H1 (cell line): ENCODE measurements at regions of chr5 and their contacts with region 1.

Region 1: DNA sequence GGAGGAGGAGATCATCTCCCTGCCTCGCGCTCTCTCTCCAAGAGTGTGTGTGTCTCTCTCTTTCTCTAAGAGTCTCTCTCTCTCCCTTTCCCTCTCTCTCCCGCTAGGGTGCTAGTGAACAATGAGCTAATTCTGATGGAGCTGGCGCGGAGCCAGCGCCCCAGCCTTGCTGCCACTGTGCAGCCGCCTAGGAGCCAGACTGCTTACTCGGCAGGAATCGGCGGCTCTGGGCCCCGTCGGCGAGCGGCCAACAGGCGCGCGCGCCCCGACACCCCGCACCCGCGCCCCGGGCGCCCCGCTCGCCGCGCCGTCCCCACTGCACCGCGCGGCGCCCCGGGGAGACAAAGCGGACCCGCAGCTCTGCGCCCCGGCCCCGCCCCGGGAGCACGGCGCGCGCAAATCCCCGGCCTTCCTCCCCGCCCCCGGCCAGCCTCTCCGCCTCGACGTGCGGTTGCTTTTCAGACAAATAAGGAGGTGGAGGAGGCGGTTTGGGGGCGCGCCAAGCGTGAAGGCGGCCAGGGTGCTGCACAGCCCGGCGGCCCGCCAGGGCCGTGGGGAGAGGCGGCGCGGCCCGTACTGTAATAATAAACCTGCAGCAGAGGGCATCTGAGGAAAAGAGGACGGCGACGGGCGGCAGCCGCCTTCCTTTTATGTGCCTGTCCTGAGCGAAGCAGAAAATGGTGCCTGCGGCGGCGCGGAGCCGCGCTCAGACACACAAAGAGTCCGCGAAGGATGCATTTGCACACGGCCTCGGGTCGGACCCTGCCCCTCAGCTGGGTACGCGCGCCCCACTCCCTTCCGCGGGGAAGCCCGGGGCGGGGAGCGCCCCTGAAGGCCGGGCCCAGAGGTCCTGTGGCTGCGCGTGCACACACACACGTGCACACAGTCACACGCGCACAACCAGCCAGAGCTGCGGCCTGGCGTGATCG is 625 bp upstream of the NREP start:
- DNase-seq: peak in 1 of 2 experiments; percentile 86
- H3K4me3 ChIP-seq: peak overlapping the region; percentile 62 to 99 (median 75)
- H3K27ac ChIP-seq: peak overlapping the region; percentile 94
- H3K4me1 ChIP-seq: peaks cover 0 to 8% (median 3%) of the 10 kb centered on the region in 4 experiments; a peak in 3 of 7 replicates
- H3K27me3 ChIP-seq: no peaks in the 10 kb centered on the region
- CTCF ChIP-seq: peak in 1 of 3 experiments; percentile 10; a peak in 1 of 4 replicates
- EP300 ChIP-seq: no peak
- POLR2A ChIP-seq: peak; percentile 91 to 95
- RAD21 ChIP-seq: peak; percentile 1 to 15; a peak in 1 of 4 replicates

Region 2: GRCh38 chr5:111719773-111720172 is 37.8 kb before region 1 on chr5:
- CTCF ChIA-PET with region 1: interaction called, 4 read pairs
- POLR2A ChIA-PET with region 1: interaction called, 13 read pairs
- DNase-seq: no peak
- H3K4me3 ChIP-seq: no peak overlapping the region
- H3K27ac ChIP-seq: 0 out of 2 replicates have a peak overlapping the region, but pooled peaks have one; percentile 1
- H3K4me1 ChIP-seq: peaks cover 0 to 9% (median 5%) of the 10 kb centered on the region in 4 experiments; a peak in 4 of 7 replicates
- H3K27me3 ChIP-seq: no peaks in the 10 kb centered on the region
- CTCF ChIP-seq: no peak
- EP300 ChIP-seq: no peak
- POLR2A ChIP-seq: no peak
- RAD21 ChIP-seq: no peak

Region 3: GRCh38 chr5:111735583-111736270 is 21.9 kb before region 1 on chr5:
- CTCF ChIA-PET with region 1: interaction called, 6 read pairs
- POLR2A ChIA-PET with region 1: interaction called, 12 read pairs
- DNase-seq: peak in 1 of 2 experiments; percentile 23
- H3K4me3 ChIP-seq: no peak overlapping the region
- H3K27ac ChIP-seq: no peak overlapping the region
- H3K4me1 ChIP-seq: peaks cover under 1 to 10% (median 5%) of the 10 kb centered on the region in 4 experiments; a peak in 3 of 7 replicates
- H3K27me3 ChIP-seq: no peaks in the 10 kb centered on the region
- CTCF ChIP-seq: no peak
- EP300 ChIP-seq: no peak
- POLR2A ChIP-seq: no peak
- RAD21 ChIP-seq: no peak

Region 4: GRCh38 chr5:111774525-111774924 is 16.9 kb after region 1 on chr5:
- CTCF ChIA-PET with region 1: interaction called, 3 read pairs
- POLR2A ChIA-PET with region 1: interaction called, 28 read pairs
- DNase-seq: no peak
- H3K4me3 ChIP-seq: no peak overlapping the region
- H3K27ac ChIP-seq: no peak overlapping the region
- H3K4me1 ChIP-seq: peaks cover 0 to 3% (median 0%) of the 10 kb centered on the region in 4 experiments; a peak in 3 of 7 replicates
- H3K27me3 ChIP-seq: no peaks in the 10 kb centered on the region
- CTCF ChIP-seq: no peak
- EP300 ChIP-seq: no peak
- POLR2A ChIP-seq: no peak
- RAD21 ChIP-seq: no peak; a peak in 1 of 4 replicates

Region 5: GRCh38 chr5:111954516-111955395 is 197.1 kb after region 1 on chr5:
- CTCF ChIA-PET with region 1: no interaction called
- POLR2A ChIA-PET with region 1: no interaction called
- DNase-seq: no peak
- H3K4me3 ChIP-seq: no peak overlapping the region
- H3K27ac ChIP-seq: no peak overlapping the region
- H3K4me1 ChIP-seq: no peaks in the 10 kb centered on the region
- H3K27me3 ChIP-seq: no peaks in the 10 kb centered on the region
- CTCF ChIP-seq: no peak
- EP300 ChIP-seq: no peak
- POLR2A ChIP-seq: no peak
- RAD21 ChIP-seq: no peak